ENCODE measurements at regions of chr6 and their contacts with region 1.

Region 1: GRCh38 chr6:6890400-6890858 is 217.3 kb upstream of the RREB1 start:
- DNase-seq: peak; percentile 49 to 86 (median 82)
- ATAC-seq: peak; percentile 72 to 81
- H3K4me3 ChIP-seq: no peak overlapping the region
- H3K27ac ChIP-seq: peak overlapping the region; percentile 40
- H3K4me1 ChIP-seq: peaks cover 12% of the 10 kb centered on the region
- H3K27me3 ChIP-seq: no peaks in the 10 kb centered on the region

Region 2: GRCh38 chr6:6758915-6759654 is 131.3 kb before region 1 on chr6:
- intact Hi-C with region 1: loop called in 1 of 4 experiments (anchors 10 kb)
- DNase-seq: peak in 2 of 3 donors; percentile 62 to 66
- ATAC-seq: peak; percentile 88 to 92
- H3K4me3 ChIP-seq: no peak overlapping the region
- H3K27ac ChIP-seq: peak overlapping the region; percentile 26
- H3K4me1 ChIP-seq: peaks cover 3% of the 10 kb centered on the region
- H3K27me3 ChIP-seq: no peaks in the 10 kb centered on the region

Measured in right cardiac atrium (tissue), 5 donors.